Heart right ventricle (tissue), 16 donors: ENCODE measurements at regions of chr9 and their contacts with region 1.

Region 1: GRCh38 chr9:88179062-88179521 is 40.8 kb upstream of the SPATA31C2 start:
- DNase-seq: peak in 1 of 2 donors; percentile 14
- ATAC-seq: peak in 1 of 8 donors; percentile 22
- H3K4me3 ChIP-seq: no peak overlapping the region
- H3K27ac ChIP-seq: no peak overlapping the region
- H3K4me1 ChIP-seq: peaks cover 0 to 4% (median 0%) of the 10 kb centered on the region in 9 donors
- H3K27me3 ChIP-seq: peaks cover 0 to 6% (median 0%) of the 10 kb centered on the region in 7 donors
- CTCF ChIP-seq: no peak

Region 2: GRCh38 chr9:88161144-88161543 is 17.9 kb before region 1 on chr9:
- intact Hi-C with region 1: loop called in 1 of 10 experiments (anchors 1 kb)
- DNase-seq: no peak
- ATAC-seq: no peak
- H3K4me3 ChIP-seq: no peak overlapping the region
- H3K27ac ChIP-seq: no peak overlapping the region
- H3K4me1 ChIP-seq: no peaks in the 10 kb centered on the region
- H3K27me3 ChIP-seq: peaks cover 0 to 16% (median 4%) of the 10 kb centered on the region in 7 donors
- CTCF ChIP-seq: no peak